ENCODE measurements at regions of chr4 and their contacts with region 1.

Region 1: DNA sequence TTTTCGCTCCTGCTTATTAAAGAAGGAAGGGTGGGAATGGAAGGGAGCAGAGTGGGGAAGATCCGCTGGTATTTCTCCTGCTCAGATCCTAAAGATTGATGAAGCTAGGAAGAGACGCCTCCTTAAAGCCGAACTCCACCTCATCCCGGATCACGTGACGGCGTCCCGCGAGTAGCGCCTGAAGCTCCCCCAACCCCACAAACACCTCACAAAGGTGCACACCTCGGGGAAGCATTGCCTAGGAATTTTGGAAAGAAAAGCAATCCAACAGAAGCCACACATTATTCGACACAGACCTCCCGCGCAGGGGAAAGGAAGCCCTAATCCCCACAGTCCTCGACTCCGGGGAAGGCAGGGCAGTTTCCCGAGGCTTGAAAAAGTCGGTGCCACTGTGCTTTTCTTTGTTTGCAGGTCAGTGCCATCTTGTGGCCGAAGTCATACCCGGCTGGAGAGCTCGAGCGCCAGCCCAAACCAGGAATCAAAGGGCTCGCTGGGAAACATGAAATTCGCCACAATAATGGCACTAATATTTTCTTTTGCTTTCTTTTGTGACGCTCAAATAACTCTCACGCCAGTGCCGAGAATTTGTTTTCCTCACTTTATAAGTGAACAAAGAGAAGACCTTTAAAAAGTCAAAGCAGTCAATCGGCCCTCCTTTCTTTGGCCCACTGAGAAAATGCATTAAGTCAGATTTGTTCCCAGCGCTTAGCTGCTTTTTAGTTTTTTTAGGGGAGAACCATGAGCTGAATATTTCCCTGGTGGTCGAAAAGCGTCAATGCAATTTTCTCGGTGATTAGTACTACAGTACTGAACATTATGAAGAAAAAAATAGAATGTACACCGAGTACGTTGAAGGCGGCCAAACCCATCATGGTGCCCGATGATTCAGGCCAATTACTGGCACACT is at the start of gene NPY1R:
- DNase-seq: peak; percentile 81
- H3K4me3 ChIP-seq: peak within 1 kb of the TSS; percentile 37 to 68 (median 47)
- H3K27ac ChIP-seq: peak within 1 kb of the TSS in 7 of 8 donors; percentile 64 to 81 (median 72)
- H3K4me1 ChIP-seq: peaks cover 0 to 21% (median 17%) of the 10 kb centered on the region in 6 donors
- H3K27me3 ChIP-seq: peaks cover 0 to 75% (median 18%) of the 10 kb centered on the region in 7 donors
- CTCF ChIP-seq: peak in 10 of 11 experiments; percentile 16 to 62 (median 56)
- POLR2A ChIP-seq: no peak
- total RNA-seq, gene NPY1R: 41.8 to 179 (median 118) TPM

Region 2: DNA sequence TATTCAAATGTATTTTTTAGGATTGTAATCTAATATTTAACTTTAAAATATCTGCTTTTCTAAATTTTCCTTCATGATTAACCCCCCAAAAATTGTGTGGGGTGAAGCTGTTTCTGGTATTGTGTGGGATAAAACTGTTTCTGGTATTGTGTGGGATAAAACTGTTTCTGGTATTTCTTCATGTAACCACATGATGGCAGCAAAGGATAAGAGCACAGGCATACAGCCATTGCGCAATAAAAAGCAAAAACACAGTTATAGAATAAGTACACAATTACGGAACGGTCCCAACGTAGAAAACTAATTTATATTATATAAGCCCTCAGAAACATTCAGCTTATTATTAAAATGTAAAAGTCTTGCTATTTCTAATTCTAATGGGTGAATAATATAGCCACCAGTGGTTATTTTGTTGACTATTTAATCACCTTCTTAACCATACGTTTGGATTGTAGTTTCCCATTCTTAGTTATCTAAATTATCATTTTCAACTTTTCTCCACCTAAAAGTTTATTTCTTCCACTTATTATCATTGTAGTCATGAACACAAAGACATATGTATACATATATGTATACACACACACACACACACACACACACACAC is 835.1 kb before region 1 on chr4:
- intact Hi-C with region 1: loop called (anchors 10 kb)
- DNase-seq: no peak
- H3K4me3 ChIP-seq: no peak overlapping the region
- H3K27ac ChIP-seq: no peak overlapping the region
- H3K4me1 ChIP-seq: no peaks in the 10 kb centered on the region
- H3K27me3 ChIP-seq: peaks cover 0 to 4% (median 0%) of the 10 kb centered on the region in 7 donors
- CTCF ChIP-seq: peak; percentile 36 to 76 (median 65)
- POLR2A ChIP-seq: no peak

Region 3: GRCh38 chr4:163048447-163048846 is 284.3 kb before region 1 on chr4:
- intact Hi-C with region 1: loop called (anchors 10 kb)
- DNase-seq: no peak
- H3K4me3 ChIP-seq: no peak overlapping the region
- H3K27ac ChIP-seq: no peak overlapping the region
- H3K4me1 ChIP-seq: no peaks in the 10 kb centered on the region
- H3K27me3 ChIP-seq: no peaks in the 10 kb centered on the region
- CTCF ChIP-seq: peak in 7 of 11 experiments; percentile 30 to 55 (median 45)
- POLR2A ChIP-seq: no peak